ENCODE measurements at regions of chr12 and their contacts with region 1.

Region 1: DNA sequence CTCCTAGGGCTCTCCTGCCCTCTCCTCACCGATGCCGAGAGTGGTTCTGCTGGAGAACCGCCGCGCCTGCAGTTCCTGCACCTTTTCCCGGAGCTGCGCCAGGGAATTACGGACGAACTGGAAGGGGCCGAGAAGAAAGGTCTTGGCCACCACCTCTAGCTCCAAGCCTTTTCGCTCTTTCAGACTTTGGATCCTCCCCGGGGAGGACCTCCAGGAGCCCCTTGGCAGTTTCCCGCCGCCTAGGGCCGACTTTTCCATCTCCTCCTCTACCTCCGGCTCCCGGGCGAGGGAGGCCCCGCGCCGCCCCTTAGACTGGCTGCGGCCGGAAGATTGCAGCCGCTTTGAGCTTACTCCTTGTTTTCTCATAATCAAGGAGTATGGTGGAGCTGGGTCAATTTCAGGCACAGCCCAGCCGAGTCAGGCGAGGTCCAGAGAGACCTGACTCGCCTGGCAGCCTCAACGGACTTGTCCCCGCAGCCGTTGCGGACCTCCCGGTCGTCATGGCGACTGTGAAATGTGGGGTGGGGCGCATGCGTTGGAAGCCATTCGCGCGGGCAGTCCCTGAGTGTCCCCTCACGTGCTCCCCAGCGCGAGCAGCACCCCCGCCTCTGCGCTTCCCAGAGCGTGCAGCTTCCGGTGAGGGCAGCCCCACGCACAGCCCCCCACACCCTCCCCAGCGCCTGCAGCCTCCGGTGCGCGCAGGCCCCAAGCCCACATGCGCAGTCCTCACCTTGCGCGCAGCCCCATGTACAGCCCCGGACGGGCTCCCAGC is at the start of gene DPY19L2:
- DNase-seq: peak; percentile 82 to 83
- ATAC-seq: peak; percentile 95 to 99 (median 97)
- H3K4me3 ChIP-seq: peak within 1 kb of the TSS; percentile 54 to 75 (median 74)
- H3K27ac ChIP-seq: peak within 1 kb of the TSS; percentile 76 to 96 (median 94)
- H3K4me1 ChIP-seq: peaks cover 0 to 8% (median 0%) of the 10 kb centered on the region in 9 donors
- H3K27me3 ChIP-seq: peaks cover 0 to 14% (median 0%) of the 10 kb centered on the region in 7 donors
- CTCF ChIP-seq: no peak
- total RNA-seq, gene DPY19L2: 29.4 to 58.8 (median 47.4) TPM

Region 2: GRCh38 chr12:63164911-63165310 is 503.3 kb before region 1 on chr12:
- intact Hi-C with region 1: no loop called
- DNase-seq: no peak
- ATAC-seq: no peak
- H3K4me3 ChIP-seq: no peak overlapping the region
- H3K27ac ChIP-seq: no peak overlapping the region
- H3K4me1 ChIP-seq: no peaks in the 10 kb centered on the region
- H3K27me3 ChIP-seq: peaks cover 0 to 6% (median 0%) of the 10 kb centered on the region in 7 donors
- CTCF ChIP-seq: no peak

Region 3: DNA sequence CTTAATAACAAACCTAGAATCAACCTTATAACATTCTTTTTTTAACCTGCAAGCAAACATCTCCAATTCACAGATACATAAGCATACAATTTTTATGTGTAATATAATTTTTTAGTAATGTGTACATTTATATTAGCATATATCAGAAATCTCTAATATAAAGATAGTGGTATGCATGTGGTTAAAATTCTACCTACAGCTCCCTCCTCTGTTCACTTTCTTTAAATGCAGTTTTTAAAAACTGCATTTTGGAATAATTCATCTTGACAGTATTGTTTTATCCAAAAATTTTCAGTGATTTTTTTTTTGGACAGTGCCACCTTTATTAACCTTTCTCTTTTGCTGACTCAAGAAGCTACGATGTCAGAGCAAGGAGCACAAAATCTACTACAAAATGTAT is 98.3 kb after region 1 on chr12:
- intact Hi-C with region 1: loop called in 1 of 10 experiments (anchors 10 kb)
- DNase-seq: no peak
- ATAC-seq: no peak
- H3K4me3 ChIP-seq: no peak overlapping the region
- H3K27ac ChIP-seq: no peak overlapping the region
- H3K4me1 ChIP-seq: no peaks in the 10 kb centered on the region
- H3K27me3 ChIP-seq: no peaks in the 10 kb centered on the region
- CTCF ChIP-seq: peak in 6 of 9 donors; percentile 25 to 43 (median 36)

Region 4: DNA sequence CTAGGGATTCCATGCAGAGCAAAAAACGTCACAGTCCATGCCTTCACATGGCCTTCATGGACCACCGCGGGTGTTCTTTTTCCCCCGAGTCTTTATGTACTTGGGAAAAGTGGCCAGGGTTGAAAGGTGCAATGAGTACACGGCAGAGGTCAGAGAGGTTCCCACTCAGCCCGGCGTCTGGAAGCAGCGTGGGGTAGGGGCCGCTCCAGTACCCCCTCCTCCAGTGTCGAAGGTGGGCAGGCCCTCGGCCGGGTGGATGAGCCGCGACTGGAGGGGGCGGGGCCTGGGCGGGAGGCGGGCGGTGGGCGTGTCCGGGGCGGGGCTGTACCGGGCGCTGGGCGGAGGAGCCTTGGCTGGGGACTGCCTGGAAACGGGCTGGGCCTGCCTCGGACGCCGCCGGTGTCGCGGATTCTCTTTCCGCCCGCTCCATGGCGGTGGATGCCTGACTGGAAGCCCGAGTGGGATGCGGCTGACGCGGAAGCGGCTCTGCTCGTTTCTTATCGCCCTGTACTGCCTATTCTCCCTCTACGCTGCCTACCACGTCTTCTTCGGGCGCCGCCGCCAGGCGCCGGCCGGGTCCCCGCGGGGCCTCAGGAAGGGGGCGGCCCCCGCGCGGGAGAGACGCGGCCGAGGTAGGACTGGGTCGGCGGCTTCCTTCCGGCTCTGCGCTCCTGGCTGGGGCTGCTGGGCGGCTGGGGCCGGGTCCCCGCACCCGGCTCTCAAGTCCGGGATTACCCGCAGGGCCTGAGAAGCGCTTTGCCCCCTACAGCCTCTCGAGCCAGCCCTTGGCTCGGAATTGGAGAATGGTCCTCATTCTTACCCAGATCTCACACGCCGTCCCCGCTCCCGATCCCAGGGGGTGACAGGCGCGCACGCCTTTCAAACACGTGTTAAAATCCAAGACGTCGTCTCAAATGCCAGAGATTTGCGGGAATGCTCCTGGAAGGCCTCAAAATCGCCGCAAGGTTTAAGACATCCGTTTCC is 111.6 kb after region 1 on chr12 and contains the start of gene RXYLT1:
- intact Hi-C with region 1: loop called in 1 of 10 experiments (anchors 10 kb)
- DNase-seq: peak; percentile 87 to 89
- ATAC-seq: peak; percentile 99 to 100 (median 100)
- H3K4me3 ChIP-seq: peak within 1 kb of the TSS; percentile 67 to 94 (median 82)
- H3K27ac ChIP-seq: peak within 1 kb of the TSS; percentile 49 to 97 (median 92)
- H3K4me1 ChIP-seq: peaks cover 0 to 21% (median 12%) of the 10 kb centered on the region in 9 donors
- H3K27me3 ChIP-seq: no peaks in the 10 kb centered on the region
- CTCF ChIP-seq: peak in 2 of 9 donors; percentile 9 to 16
- total RNA-seq, gene RXYLT1: 15.1 to 20.8 (median 17.4) TPM

Region 5: GRCh38 chr12:63792338-63792737 is 124.1 kb after region 1 on chr12:
- intact Hi-C with region 1: loop called in 2 of 10 experiments (anchors 10 kb)
- DNase-seq: no peak
- ATAC-seq: no peak
- H3K4me3 ChIP-seq: no peak overlapping the region
- H3K27ac ChIP-seq: no peak overlapping the region
- H3K4me1 ChIP-seq: no peaks in the 10 kb centered on the region
- H3K27me3 ChIP-seq: no peaks in the 10 kb centered on the region
- CTCF ChIP-seq: no peak

Region 6: DNA sequence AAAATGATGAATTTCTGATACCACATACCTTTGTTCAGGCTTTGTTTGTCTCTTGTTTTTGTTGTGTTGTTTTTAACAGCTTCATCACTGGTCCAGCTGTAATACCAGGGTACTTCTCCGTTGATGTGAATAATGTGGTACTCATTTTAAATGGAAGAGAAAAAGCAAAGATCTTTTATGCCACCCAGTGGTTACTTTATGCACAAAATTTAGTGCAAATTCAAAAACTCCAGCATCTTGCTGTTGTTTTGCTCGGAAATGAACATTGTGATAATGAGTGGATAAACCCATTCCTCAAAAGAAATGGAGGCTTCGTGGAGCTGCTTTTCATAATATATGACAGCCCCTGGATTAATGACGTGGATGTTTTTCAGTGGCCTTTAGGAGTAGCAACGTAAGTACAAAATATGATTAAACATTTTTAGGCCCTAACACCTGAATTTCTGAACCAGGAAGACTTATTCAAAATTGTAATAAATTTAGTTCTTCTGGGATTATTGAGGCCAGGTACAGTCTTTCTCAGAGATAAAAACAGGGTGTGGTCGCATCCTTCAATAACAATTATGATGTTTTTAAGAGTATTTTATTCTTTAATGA is 133.9 kb after region 1 on chr12:
- intact Hi-C with region 1: loop called in 2 of 10 experiments (anchors 10 kb)
- DNase-seq: no peak
- ATAC-seq: no peak
- H3K4me3 ChIP-seq: no peak overlapping the region
- H3K27ac ChIP-seq: no peak overlapping the region
- H3K4me1 ChIP-seq: no peaks in the 10 kb centered on the region
- H3K27me3 ChIP-seq: no peaks in the 10 kb centered on the region
- CTCF ChIP-seq: peak; percentile 27 to 72 (median 60)

Region 7: DNA sequence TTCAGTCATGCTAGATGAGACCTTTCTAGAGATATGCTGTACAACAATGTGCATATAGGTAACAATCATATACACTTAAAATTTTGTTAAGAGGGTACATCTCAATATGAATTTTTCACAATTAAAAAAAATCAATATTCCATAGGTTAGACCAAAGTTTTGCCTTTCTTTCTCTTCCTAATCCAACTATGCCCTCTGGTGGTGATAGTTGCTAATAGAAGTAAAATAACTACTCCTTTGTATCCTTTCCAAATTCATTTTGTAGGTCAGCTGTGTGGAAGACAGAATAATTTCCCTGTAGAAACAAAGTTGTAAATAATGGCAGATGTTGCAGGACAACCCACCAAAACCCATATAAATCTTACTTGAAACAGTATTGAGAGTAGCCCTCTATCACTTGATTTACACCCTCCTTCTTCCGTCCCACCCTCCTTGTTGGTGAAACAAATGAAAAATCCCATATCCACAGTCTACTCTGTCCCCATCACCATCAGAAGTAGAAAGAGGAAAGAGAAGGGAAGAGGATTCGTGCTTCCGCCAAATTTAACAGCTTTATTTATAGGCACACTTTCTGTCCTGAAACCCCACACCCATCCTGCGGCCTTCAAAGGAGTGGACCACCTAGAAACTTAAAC is 588.1 kb after region 1 on chr12:
- intact Hi-C with region 1: loop called in 1 of 10 experiments (anchors 10 kb)
- DNase-seq: peak in 1 of 2 donors; percentile 29
- ATAC-seq: peak in 4 of 8 donors; percentile 25 to 52 (median 36)
- H3K4me3 ChIP-seq: peak overlapping the region in 3 of 10 donors; percentile 0 to 15 (median 11)
- H3K27ac ChIP-seq: no peak overlapping the region
- H3K4me1 ChIP-seq: peaks cover 0 to 12% (median 0%) of the 10 kb centered on the region in 9 donors
- H3K27me3 ChIP-seq: no peaks in the 10 kb centered on the region
- CTCF ChIP-seq: peak; percentile 54 to 83 (median 78)